Common myeloid progenitor, CD34-positive (primary cell): ENCODE measurements at regions of chr13 and their contacts with region 1.

Region 1: GRCh38 chr13:113458253-113459065 is 5.2 kb upstream of the ADPRHL1 start:
- DNase-seq: peak; percentile 34 to 57 (median 38)
- H3K4me3 ChIP-seq: no peak overlapping the region
- H3K27ac ChIP-seq: no peak overlapping the region
- H3K4me1 ChIP-seq: no peaks in the 10 kb centered on the region
- H3K27me3 ChIP-seq: no peaks in the 10 kb centered on the region

Region 2: GRCh38 chr13:113562085-113562749 is 103.8 kb after region 1 on chr13:
- CTCF ChIA-PET with region 1: interaction called, 111 read pairs
- POLR2A ChIA-PET with region 1: no interaction called
- DNase-seq: peak; percentile 70 to 83 (median 80)
- H3K4me3 ChIP-seq: no peak overlapping the region
- H3K27ac ChIP-seq: no peak overlapping the region
- H3K4me1 ChIP-seq: peaks cover 0 to 2% (median 0%) of the 10 kb centered on the region in 4 experiments
- H3K27me3 ChIP-seq: peaks cover 0 to 12% (median 0%) of the 10 kb centered on the region in 5 experiments

Region 3: GRCh38 chr13:113567681-113568080 is 109.2 kb after region 1 on chr13:
- CTCF ChIA-PET with region 1: interaction called, 111 read pairs
- POLR2A ChIA-PET with region 1: no interaction called
- DNase-seq: no peak
- H3K4me3 ChIP-seq: no peak overlapping the region
- H3K27ac ChIP-seq: no peak overlapping the region
- H3K4me1 ChIP-seq: no peaks in the 10 kb centered on the region
- H3K27me3 ChIP-seq: peaks cover 0 to 12% (median 2%) of the 10 kb centered on the region in 5 experiments